H1 (cell line): ENCODE measurements at regions of chr10 and their contacts with region 1.

Region 1: DNA sequence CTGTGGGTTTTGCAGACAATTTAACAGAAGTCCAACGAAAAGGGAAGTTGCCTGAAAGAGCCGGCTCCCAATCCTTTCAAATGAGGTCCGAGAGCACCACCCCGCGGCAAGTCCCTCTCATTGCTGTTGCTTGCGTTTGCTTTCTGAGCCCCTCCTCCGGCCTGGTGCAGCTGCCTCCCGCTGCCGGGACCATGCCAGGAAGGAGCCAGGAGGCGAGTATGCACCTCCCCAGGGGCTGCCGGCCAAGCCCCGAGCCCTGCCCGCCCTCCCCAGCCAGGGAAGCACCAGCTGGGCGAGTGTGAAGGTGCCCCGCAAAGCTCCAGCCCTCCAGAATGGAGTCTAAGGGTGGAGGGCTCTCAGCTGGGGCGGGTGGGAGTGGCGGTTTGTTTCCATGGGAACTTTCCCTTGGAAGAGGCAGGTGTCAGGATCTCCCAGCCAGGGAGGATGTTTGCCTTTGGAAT is 25.8 kb upstream of the PPP2R2D start:
- DNase-seq: peak; percentile 68 to 94
- H3K4me3 ChIP-seq: peak overlapping the region in 3 of 4 experiments; percentile 17 to 44 (median 26); a peak in 2 of 8 replicates
- H3K27ac ChIP-seq: no peak overlapping the region
- H3K4me1 ChIP-seq: peaks cover 0 to 3% (median 0%) of the 10 kb centered on the region in 4 experiments; a peak in 2 of 7 replicates
- H3K27me3 ChIP-seq: no peaks in the 10 kb centered on the region; a peak in 1 of 7 replicates
- CTCF ChIP-seq: peak; percentile 81 to 91 (median 90)
- EP300 ChIP-seq: no peak
- POLR2A ChIP-seq: no peak
- RAD21 ChIP-seq: peak; percentile 94 to 96

Region 2: DNA sequence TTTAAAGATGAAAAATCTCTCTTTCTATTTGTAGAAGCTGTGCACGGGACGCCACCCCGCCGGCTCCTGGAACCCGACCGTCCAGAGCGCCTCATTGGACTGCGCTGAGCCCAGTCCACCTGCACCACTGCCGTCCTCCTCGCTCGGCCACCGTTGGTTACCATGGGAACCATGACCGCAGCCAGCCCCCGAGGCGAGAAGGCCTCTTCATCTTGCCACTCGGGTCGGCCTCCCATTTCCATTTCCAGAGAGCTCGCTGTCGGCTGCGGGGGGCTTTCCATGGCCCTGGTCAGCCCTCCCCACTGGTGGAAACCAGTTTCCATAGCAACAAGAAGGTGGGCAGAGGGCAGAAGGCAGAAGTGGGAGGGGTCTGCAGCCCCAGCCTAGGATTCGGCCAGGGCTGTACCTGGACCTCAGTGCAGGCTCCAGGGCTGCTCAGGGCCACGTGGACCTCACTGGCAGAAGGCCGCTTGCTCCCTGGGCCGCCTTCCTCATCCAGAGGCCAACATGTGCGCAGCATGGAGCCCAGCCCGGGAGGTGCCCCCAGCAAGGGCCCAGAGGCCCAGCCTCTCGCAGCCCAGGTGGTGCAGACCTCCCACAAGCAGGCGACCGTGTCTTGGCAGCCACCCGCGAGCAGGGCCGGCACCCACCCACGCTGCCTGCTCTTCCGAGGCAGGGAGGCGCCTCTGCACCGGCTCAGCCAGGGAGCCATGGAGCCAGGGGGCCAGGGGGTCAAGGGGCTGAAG is 257.7 kb before region 1 on chr10:
- CTCF ChIA-PET with region 1: no interaction called
- POLR2A ChIA-PET with region 1: no interaction called
- DNase-seq: peak in 1 of 2 experiments; percentile 46
- H3K4me3 ChIP-seq: no peak overlapping the region
- H3K27ac ChIP-seq: no peak overlapping the region
- H3K4me1 ChIP-seq: no peaks in the 10 kb centered on the region; a peak in 2 of 7 replicates
- H3K27me3 ChIP-seq: no peaks in the 10 kb centered on the region
- CTCF ChIP-seq: no peak
- EP300 ChIP-seq: no peak
- POLR2A ChIP-seq: no peak
- RAD21 ChIP-seq: no peak

Region 3: DNA sequence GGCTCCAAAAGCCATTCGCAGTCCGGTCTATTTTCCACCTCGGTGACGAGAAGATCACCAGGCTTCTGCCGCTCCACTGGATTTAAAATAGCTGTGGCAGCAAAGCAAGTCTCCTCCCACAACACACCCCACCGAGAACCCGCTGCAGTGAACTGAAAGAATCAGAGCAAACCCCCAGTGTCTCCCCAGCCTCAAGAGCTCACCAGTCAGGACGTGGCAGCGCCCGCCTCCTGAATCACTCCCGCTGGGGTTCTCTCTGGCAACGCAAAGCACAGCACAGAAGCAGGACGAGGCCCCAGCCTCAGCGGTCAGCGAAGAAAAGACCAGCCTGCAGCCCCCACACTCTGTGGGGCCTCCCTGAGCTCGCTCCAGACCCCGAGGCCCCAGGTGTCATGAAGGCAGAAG is 100.3 kb before region 1 on chr10:
- CTCF ChIA-PET with region 1: interaction called, 11 read pairs
- POLR2A ChIA-PET with region 1: no interaction called
- DNase-seq: peak in 1 of 2 experiments; percentile 38
- H3K4me3 ChIP-seq: no peak overlapping the region
- H3K27ac ChIP-seq: no peak overlapping the region
- H3K4me1 ChIP-seq: peaks cover 0 to 3% (median 0%) of the 10 kb centered on the region in 4 experiments; a peak in 4 of 7 replicates
- H3K27me3 ChIP-seq: no peaks in the 10 kb centered on the region
- CTCF ChIP-seq: no peak
- EP300 ChIP-seq: no peak
- POLR2A ChIP-seq: no peak
- RAD21 ChIP-seq: no peak

Region 4: DNA sequence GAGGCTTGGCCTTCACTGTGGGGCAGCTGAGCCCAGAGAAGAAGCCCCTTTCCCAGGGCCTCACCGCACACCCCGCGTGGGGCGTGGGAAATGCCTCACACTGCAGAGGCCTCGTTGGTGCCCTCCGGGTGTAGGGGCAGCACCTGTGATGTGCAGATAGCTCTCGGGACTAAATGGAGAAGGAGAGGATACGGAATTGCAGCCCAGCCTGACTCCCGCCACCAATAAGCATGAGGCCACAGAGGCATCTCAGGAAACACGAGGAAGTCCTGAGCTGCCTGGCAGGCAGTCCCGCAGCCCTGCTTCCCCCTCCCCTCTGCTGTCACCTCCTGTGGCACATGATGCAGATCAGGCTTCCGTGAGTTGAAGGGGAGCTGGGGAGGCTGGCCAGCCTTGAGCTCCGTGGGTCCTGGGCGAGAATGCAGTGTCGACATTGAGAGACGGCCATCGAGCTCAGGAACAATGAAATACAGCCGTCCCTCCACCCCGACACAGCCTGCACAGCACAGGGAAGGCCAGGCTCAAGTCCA is 33.8 kb before region 1 on chr10:
- CTCF ChIA-PET with region 1: interaction called, 17 read pairs
- POLR2A ChIA-PET with region 1: no interaction called
- DNase-seq: no peak
- H3K4me3 ChIP-seq: no peak overlapping the region
- H3K27ac ChIP-seq: no peak overlapping the region
- H3K4me1 ChIP-seq: no peaks in the 10 kb centered on the region; a peak in 1 of 7 replicates
- H3K27me3 ChIP-seq: no peaks in the 10 kb centered on the region
- CTCF ChIP-seq: no peak
- EP300 ChIP-seq: no peak
- POLR2A ChIP-seq: no peak
- RAD21 ChIP-seq: no peak

Region 5: GRCh38 chr10:131860806-131861440 is 14.1 kb before region 1 on chr10:
- CTCF ChIA-PET with region 1: interaction called, 21 read pairs
- POLR2A ChIA-PET with region 1: no interaction called
- DNase-seq: peak in 1 of 2 experiments; percentile 54
- H3K4me3 ChIP-seq: no peak overlapping the region
- H3K27ac ChIP-seq: no peak overlapping the region
- H3K4me1 ChIP-seq: no peaks in the 10 kb centered on the region
- H3K27me3 ChIP-seq: no peaks in the 10 kb centered on the region
- CTCF ChIP-seq: peak; percentile 58 to 80 (median 77)
- EP300 ChIP-seq: no peak
- POLR2A ChIP-seq: no peak
- RAD21 ChIP-seq: peak; percentile 25 to 51; a peak in 3 of 4 replicates

Region 6: DNA sequence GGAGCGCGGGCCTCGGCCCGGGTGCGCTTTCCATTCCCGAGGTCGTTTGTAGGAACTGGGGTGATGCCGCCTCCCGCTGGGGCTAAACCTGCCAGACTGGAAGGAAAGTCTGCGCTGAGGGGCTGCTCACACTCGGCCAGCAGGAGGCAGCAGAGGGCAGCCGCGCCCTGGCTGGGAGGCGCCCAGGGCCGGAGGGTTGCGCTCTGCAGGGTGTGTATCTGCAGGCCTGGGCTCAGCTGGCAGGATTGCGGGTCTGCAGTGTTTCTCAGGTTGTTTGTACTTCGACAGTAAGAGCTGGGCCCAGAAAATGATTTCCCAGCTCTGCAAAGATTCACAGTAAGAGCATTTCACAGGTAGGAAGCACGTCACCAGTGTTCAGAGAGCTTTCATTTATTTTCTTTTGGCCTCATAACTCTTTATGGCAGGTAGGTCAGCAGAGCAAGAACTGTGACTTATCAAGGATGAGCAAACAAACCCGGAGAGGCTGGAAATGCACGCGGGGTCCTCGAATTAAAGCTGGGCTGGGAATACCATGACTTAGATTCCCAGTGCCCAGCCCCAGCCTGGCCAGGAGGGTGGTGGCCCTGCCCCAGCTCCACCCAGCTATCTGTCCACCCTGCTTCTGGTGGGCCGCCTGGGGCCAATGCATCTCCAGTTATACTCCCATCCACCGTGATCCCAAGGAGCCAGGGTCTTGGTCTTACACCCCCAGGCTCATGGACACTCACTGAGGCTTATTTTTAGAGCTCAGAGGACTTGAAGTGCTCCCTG is 10.6 kb after region 1 on chr10:
- CTCF ChIA-PET with region 1: interaction called, 18 read pairs
- POLR2A ChIA-PET with region 1: no interaction called
- DNase-seq: peak; percentile 51 to 94
- H3K4me3 ChIP-seq: no peak overlapping the region
- H3K27ac ChIP-seq: no peak overlapping the region
- H3K4me1 ChIP-seq: no peaks in the 10 kb centered on the region
- H3K27me3 ChIP-seq: 0 out of 7 replicates have a peak, but pooled peaks cover 0 to 2% (median 0%) of the 10 kb centered on the region in 4 experiments
- CTCF ChIP-seq: peak; percentile 94 to 98 (median 98)
- EP300 ChIP-seq: no peak
- POLR2A ChIP-seq: no peak
- RAD21 ChIP-seq: peak; percentile 79 to 87

Region 7: GRCh38 chr10:131928248-131929095 is 53.5 kb after region 1 on chr10:
- CTCF ChIA-PET with region 1: no interaction called
- POLR2A ChIA-PET with region 1: no interaction called
- DNase-seq: no peak
- H3K4me3 ChIP-seq: no peak overlapping the region
- H3K27ac ChIP-seq: no peak overlapping the region
- H3K4me1 ChIP-seq: peaks cover 4 to 42% (median 14%) of the 10 kb centered on the region in 4 experiments; a peak in 6 of 7 replicates
- H3K27me3 ChIP-seq: no peaks in the 10 kb centered on the region
- CTCF ChIP-seq: no peak
- EP300 ChIP-seq: no peak
- POLR2A ChIP-seq: no peak
- RAD21 ChIP-seq: no peak